ENCODE measurements at regions of chr16 and their contacts with region 1.

Region 1: GRCh38 chr16:2933136-2933535 is 21.4 kb downstream of the FLYWCH1 start:
- DNase-seq: no peak
- H3K4me3 ChIP-seq: no peak overlapping the region
- H3K27ac ChIP-seq: no peak overlapping the region
- H3K4me1 ChIP-seq: no peaks in the 10 kb centered on the region
- H3K27me3 ChIP-seq: no peaks in the 10 kb centered on the region
- CTCF ChIP-seq: no peak
- EP300 ChIP-seq: no peak
- POLR2A ChIP-seq: no peak

Region 2: GRCh38 chr16:2867987-2868789 is 64.9 kb before region 1 on chr16:
- intact Hi-C with region 1: loop called in 1 of 4 experiments (anchors 5 kb)
- DNase-seq: peak; percentile 87 to 96 (median 93)
- H3K4me3 ChIP-seq: peak overlapping the region; percentile 61
- H3K27ac ChIP-seq: peak overlapping the region in 1 of 2 donors; percentile 85
- H3K4me1 ChIP-seq: peaks cover 3% of the 10 kb centered on the region
- H3K27me3 ChIP-seq: no peaks in the 10 kb centered on the region
- CTCF ChIP-seq: peak; percentile 95 to 96 (median 95)
- EP300 ChIP-seq: no peak
- POLR2A ChIP-seq: peak; percentile 49